HEK293 (cell line): ENCODE measurements at regions of chr1 and their contacts with region 1.

Region 1: GRCh38 chr1:165257969-165258459 is 98.5 kb downstream of the LMX1A start:
- H3K4me3 ChIP-seq: no peak overlapping the region
- H3K27ac ChIP-seq: no peak overlapping the region
- H3K4me1 ChIP-seq: peaks cover 3% of the 10 kb centered on the region; the same call in 1 of the 2 replicates
- CTCF ChIP-seq: peak; percentile 64; the same call in 1 of the 2 replicates

Region 2: DNA sequence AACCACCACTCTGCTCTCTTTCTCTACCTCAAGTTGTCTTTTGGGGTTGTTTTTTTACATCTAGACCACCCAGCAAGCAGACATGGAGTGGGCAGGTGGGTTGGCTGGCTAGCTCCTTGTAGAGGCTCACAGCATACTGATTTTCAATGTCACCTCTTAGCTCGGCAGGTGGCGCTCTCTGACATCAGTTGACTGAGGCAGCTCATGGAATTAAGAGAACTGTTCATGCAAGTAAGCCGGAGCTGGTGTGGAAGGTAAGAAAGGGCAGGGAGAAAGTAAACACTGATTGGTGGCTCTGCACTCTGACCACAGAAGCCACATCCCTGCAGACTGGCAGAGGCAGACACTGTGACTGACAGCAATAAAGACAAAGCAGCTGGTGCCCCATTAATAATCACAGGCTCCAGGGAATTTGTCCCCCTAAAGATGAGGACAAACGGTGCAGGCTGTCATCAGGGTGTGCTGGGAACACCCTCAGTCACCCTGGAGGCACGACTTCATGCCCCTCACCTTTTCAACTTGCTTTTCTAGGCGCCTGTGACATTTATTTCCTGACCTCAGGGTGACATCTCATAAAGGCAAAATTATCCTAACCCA is 128.3 kb before region 1 on chr1:
- CTCF ChIA-PET with region 1: interaction called, 16 read pairs
- POLR2A ChIA-PET with region 1: no interaction called
- H3K4me3 ChIP-seq: no peak overlapping the region
- H3K27ac ChIP-seq: no peak overlapping the region
- H3K4me1 ChIP-seq: no peaks in the 10 kb centered on the region
- CTCF ChIP-seq: peak; percentile 72

Region 3: GRCh38 chr1:165240492-165240891 is 17.5 kb before region 1 on chr1:
- CTCF ChIA-PET with region 1: interaction called, 16 read pairs
- POLR2A ChIA-PET with region 1: no interaction called
- H3K4me3 ChIP-seq: no peak overlapping the region
- H3K27ac ChIP-seq: no peak overlapping the region
- H3K4me1 ChIP-seq: no peaks in the 10 kb centered on the region
- CTCF ChIP-seq: no peak

Region 4: GRCh38 chr1:165284454-165284853 is 26.4 kb after region 1 on chr1:
- CTCF ChIA-PET with region 1: interaction called, 22 read pairs
- POLR2A ChIA-PET with region 1: no interaction called
- H3K4me3 ChIP-seq: no peak overlapping the region
- H3K27ac ChIP-seq: no peak overlapping the region
- H3K4me1 ChIP-seq: peaks cover 12% of the 10 kb centered on the region
- CTCF ChIP-seq: no peak

Region 5: DNA sequence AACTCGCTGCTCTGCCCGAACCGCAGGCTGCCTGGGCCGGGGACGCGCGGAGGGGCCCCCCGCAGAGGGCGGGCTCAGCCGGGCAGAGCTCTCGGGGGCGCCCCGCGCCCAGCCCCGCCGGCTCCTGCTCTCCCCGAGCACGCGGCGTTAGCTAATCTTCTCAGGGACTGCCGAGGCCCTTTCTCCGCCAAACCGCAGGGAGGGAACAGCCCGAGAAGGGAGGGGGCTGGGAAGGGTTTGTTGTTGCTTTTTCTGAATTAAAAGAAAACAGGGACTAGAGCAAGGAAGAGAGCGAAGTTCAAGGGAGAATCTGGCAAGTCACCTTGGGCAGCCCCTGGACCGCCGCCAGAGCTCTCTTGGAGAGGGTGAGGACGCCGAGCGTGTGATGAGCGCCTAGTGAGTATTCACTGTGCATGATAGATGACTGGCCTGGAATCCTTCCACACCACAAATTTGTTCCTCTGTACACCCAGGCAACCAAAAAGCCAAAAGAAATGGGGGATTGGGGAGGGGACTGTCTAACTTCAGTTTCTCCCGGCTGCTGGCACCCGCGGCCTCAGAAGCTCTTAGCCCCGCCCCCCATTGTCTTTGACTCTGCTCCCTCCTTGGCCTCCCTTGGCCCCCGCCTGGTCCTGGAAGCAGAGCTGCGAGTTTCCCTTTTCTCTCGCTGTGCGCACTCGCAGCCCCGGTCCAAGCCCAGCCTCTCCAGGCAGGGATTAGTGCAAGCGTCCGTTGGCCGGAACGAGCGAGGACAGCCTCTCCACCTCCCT is 118.2 kb after region 1 on chr1:
- CTCF ChIA-PET with region 1: interaction called, 125 read pairs
- POLR2A ChIA-PET with region 1: no interaction called
- H3K4me3 ChIP-seq: no peak overlapping the region; the same call in 1 of the 2 replicates
- H3K27ac ChIP-seq: peak overlapping the region; percentile 78
- H3K4me1 ChIP-seq: peaks cover 10% of the 10 kb centered on the region
- CTCF ChIP-seq: no peak

Region 6: DNA sequence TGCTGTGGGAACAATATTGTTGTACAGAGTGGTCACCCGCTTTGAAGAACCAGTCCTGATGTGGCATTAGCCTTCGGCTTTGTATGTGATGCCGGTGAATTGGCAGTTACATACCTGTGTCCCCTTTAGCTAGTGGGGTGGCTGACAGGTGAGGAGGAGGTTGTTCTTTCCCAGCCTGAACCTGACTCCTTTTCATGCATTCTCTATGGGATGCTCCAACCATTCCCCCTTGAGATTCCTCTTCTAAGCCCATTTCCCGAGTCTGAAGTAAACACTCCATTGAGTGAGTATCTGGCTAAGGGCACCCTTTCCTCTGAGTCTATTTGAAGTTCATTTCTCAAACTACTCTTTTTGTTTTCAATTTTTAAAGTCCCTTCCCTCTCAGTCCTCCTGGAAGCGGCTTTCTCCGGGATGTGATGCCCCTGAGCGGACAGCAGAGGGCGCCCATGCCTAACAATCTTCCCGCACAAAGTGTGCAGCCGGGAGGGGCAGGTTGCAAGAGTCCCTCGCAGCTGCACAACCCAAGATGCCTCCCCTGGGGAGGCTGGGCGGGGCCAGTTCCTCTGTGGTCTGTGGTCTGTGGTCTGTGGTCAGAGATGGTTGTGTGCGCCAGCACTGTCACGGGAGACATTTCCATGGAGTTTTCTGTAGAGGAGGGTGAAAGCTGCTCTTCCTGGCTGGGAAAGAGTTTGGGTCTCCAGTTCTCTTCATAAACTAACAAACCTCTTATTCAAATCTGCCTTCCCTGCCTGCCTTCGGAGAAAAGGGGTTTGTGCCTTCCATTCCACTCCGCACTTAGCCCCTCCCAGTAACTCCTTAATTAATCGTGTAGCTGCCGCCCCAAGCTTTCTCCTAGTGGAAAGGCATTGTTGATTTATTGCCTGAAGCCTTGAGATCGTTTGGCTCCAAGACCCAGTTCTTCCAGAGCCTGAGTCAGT is 134.9 kb after region 1 on chr1:
- CTCF ChIA-PET with region 1: interaction called, 29 read pairs
- POLR2A ChIA-PET with region 1: no interaction called
- H3K4me3 ChIP-seq: peak overlapping the region; percentile 28
- H3K27ac ChIP-seq: no peak overlapping the region
- H3K4me1 ChIP-seq: no peaks in the 10 kb centered on the region
- CTCF ChIP-seq: peak; percentile 91